ENCODE measurements at regions of chr3 and their contacts with region 1.

Region 1: GRCh38 chr3:32438596-32439344 is 47.1 kb downstream of the CMTM7 start:
- DNase-seq: no peak
- H3K4me3 Mint-ChIP-seq: peak overlapping the region; percentile 67
- H3K27ac Mint-ChIP-seq: peak overlapping the region; percentile 88
- H3K4me1 Mint-ChIP-seq: peaks cover 61% of the 10 kb centered on the region
- H3K27me3 Mint-ChIP-seq: no peaks in the 10 kb centered on the region

Region 2: GRCh38 chr3:30628901-30629590 is 1809.7 kb before region 1 on chr3:
- intact Hi-C with region 1: loop called (anchors 10 kb)
- DNase-seq: peak; percentile 80
- H3K4me3 Mint-ChIP-seq: peak overlapping the region; percentile 57
- H3K27ac Mint-ChIP-seq: peak overlapping the region; percentile 99
- H3K4me1 Mint-ChIP-seq: peaks cover 76% of the 10 kb centered on the region
- H3K27me3 Mint-ChIP-seq: no peaks in the 10 kb centered on the region

Region 3: GRCh38 chr3:32420126-32421038 is 18.4 kb before region 1 on chr3:
- intact Hi-C with region 1: loop called (anchors 2 kb)
- DNase-seq: peak; percentile 74
- H3K4me3 Mint-ChIP-seq: peak overlapping the region; percentile 60
- H3K27ac Mint-ChIP-seq: peak overlapping the region; percentile 87
- H3K4me1 Mint-ChIP-seq: peaks cover 77% of the 10 kb centered on the region
- H3K27me3 Mint-ChIP-seq: no peaks in the 10 kb centered on the region